H1 (cell line): ENCODE measurements at regions of chr6 and their contacts with region 1.

Region 1: DNA sequence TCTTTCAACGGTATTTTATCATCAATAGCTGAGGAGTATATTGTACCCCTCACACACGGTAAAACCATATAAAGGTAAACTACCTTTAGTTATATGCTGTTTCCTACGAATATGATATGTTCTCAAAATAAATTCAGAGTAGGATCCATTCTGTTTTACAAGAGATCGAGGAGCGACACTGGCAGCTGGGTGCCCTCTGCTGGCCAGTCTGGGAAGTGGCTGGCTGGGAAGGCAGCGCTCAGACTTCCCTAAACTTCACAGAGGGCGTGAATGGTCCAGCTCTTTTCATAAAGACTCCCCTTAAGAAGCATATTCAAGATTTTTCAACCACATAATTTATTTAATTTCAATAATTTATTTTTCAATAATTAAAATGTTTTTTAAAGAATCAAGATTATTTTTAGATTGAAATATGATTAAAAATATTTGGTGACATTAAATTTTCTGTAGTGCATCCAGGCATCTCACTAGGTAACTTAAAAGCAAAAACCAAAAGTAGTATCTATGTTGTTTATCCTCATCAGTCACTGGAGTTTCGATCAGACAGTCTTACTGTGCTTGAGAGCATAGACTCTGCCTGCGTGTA is 187.5 kb upstream of the PDE10A start:
- DNase-seq: peak in 1 of 2 experiments; percentile 86
- H3K4me3 ChIP-seq: no peak overlapping the region
- H3K27ac ChIP-seq: no peak overlapping the region
- H3K4me1 ChIP-seq: peaks cover 0 to 13% (median 8%) of the 10 kb centered on the region in 4 experiments; a peak in 5 of 7 replicates
- H3K27me3 ChIP-seq: peaks cover 14 to 36% (median 26%) of the 10 kb centered on the region in 4 experiments
- CTCF ChIP-seq: peak; percentile 90 to 96 (median 90)
- EP300 ChIP-seq: no peak
- POLR2A ChIP-seq: no peak
- RAD21 ChIP-seq: peak; percentile 89 to 92

Region 2: DNA sequence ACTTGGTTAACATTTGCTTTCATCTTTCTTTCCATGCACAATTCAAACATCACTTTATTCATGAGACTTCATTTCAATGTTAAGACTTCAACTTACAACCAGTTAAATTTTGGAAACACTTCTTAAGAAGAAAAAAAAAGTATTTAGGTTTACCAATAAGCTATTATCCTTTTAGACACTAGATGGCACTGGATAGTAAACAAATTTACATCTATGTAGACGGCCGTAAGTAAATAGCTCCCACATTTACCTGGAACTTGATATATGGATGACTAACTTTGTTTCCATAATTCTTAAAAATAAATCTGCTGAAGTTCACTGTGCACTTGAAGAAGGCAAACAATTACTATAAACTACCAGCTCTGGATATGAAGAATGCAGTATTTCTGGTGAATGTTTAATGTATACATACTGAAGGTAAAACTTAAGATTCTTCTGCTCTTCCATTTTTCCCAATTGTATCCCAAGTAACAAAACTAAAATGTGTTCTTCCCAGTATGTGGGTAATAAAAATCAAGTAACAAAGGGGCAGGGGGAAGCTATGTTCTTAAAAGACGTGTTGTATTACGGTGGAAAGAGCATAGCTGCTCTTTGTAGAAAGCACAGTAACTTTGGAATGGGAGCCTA is 410.5 kb before region 1 on chr6:
- CTCF ChIA-PET with region 1: interaction called, 17 read pairs
- POLR2A ChIA-PET with region 1: no interaction called
- DNase-seq: no peak
- H3K4me3 ChIP-seq: no peak overlapping the region
- H3K27ac ChIP-seq: no peak overlapping the region
- H3K4me1 ChIP-seq: no peaks in the 10 kb centered on the region
- H3K27me3 ChIP-seq: no peaks in the 10 kb centered on the region
- CTCF ChIP-seq: peak in 2 of 3 experiments; percentile 27 to 56; a peak in 2 of 4 replicates
- EP300 ChIP-seq: no peak
- POLR2A ChIP-seq: no peak
- RAD21 ChIP-seq: peak; percentile 59 to 72

Region 3: DNA sequence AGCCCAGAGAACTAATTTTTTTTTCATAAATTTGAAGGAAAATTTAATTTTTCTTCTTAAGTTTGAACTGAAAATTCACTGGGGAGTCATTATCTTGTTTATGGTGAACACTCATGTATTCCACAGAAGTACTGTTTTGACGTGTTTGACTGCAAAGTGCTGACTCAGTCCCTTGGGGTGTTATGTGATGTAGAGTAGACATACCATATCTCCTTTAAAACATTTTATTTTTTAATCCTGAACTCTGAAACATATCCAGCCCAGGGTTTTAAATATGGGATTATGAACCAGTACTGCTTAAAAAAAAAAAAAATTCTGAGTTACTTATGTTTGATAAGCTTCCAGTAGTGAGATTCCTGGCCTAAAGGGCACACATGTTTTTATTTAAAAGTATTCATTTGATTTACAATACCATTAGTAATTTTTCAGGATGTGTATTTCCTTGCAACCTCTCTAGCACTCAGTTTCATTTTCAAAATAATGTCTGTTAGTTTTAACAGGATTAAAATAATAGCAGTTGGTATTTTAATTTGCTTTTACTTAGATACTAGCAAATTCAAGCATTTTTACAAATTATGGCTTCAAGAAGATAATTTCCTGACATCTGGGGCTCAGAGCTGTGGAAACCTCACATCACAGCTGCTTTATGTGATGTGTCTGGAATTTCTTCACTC is 105.8 kb before region 1 on chr6:
- CTCF ChIA-PET with region 1: interaction called, 15 read pairs
- POLR2A ChIA-PET with region 1: no interaction called
- DNase-seq: no peak
- H3K4me3 ChIP-seq: no peak overlapping the region
- H3K27ac ChIP-seq: no peak overlapping the region
- H3K4me1 ChIP-seq: no peaks in the 10 kb centered on the region
- H3K27me3 ChIP-seq: no peaks in the 10 kb centered on the region
- CTCF ChIP-seq: no peak
- EP300 ChIP-seq: no peak
- POLR2A ChIP-seq: no peak
- RAD21 ChIP-seq: no peak

Region 4: DNA sequence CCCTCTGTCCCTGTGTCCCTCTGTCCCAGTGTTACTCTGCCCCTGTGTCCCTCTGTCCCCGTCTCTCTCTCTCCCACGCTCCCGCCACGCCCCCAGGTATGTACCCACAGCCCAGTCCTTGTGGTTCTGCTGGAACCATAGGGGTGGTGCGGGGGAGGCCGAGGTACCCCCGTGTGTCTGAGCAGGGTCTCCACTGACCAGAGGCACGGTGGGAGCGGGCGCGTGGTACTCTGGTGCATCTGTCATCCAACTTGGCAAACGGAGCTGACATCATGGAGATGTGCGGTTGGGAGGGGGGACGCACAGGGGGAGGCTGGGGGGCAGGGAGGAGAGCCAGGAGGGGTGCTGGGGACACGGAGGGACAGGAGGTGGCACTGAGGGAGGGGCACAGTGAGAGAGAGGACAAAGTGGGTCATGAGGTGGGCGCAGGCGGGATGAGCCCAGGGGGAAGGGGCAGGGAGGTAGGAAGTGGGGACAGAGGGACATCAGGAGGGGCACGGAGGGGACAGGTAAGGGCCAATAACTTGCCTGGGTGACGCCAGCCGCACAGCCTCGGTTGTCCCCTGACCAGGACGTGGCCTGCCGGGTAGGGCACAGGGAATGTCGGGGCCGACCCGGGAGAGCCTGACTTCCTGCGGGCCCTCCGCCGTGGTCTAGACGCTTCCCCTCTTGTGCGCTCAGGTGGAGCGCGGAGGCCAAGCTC is 23.9 kb before region 1 on chr6:
- CTCF ChIA-PET with region 1: interaction called, 14 read pairs
- POLR2A ChIA-PET with region 1: no interaction called
- DNase-seq: no peak
- H3K4me3 ChIP-seq: no peak overlapping the region
- H3K27ac ChIP-seq: no peak overlapping the region
- H3K4me1 ChIP-seq: no peaks in the 10 kb centered on the region
- H3K27me3 ChIP-seq: no peaks in the 10 kb centered on the region
- CTCF ChIP-seq: no peak
- EP300 ChIP-seq: no peak
- POLR2A ChIP-seq: no peak
- RAD21 ChIP-seq: no peak